Activated CD4-positive, alpha-beta T cell treated with anti-CD3 and anti-CD28 coated beads for 36 hours (primary cell): ENCODE measurements at regions of chr6 and their contacts with region 1.

Region 1: GRCh38 chr6:6515691-6516607 is 72.6 kb upstream of the LY86 start:
- DNase-seq: peak; percentile 84
- ATAC-seq: peak; percentile 90
- H3K4me3 Mint-ChIP-seq: no peak overlapping the region
- H3K27ac Mint-ChIP-seq: no peak overlapping the region
- H3K4me1 Mint-ChIP-seq: peaks cover 18% of the 10 kb centered on the region
- H3K27me3 Mint-ChIP-seq: peaks cover 78% of the 10 kb centered on the region

Region 2: DNA sequence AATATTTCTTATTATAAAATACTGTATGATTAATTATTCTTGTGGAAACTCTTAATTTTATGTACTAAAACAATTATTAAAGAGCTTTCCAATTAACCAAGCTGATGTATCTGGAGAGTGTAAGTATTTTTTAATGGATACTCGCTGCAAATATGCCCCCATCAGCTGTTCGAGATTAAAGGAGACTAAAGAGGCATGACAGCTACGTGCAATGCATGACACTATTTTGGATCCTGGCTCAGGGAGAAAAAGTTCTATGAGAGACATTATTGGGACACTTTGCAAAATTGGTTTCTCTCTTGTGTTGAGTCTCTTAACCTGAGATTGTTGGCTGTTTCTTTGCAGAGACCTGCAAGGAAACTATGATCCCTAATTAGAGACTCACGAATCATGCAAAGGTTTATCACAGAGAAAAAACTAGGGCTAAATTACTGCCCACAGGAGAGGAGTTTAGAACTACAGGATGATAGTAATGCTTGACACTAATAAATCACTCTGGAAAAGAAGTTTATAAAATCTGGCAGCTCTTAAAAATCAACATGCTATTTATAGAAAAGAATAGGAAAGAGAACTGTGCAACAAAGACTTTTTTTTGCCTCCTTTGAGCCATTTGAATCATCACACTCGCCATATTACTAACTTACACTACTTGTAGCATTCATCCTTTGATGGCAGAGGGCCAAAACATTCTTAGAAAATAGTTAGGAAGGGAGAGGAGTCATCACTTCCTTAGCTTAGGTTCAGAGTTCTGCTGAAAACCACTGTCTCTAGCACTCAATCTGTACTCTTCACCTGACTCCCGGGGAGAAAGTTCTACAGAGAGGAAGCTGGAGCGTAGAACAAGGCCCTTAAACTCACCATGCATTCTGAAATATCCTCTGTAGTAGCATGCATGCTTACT is 534.6 kb before region 1 on chr6:
- CTCF ChIA-PET with region 1: no interaction called
- POLR2A ChIA-PET with region 1: no interaction called
- intact Hi-C with region 1: loop called (anchors 5 kb)
- DNase-seq: no peak
- ATAC-seq: peak; percentile 69
- H3K4me3 Mint-ChIP-seq: no peak overlapping the region
- H3K27ac Mint-ChIP-seq: no peak overlapping the region
- H3K4me1 Mint-ChIP-seq: peaks cover 44% of the 10 kb centered on the region
- H3K27me3 Mint-ChIP-seq: no peaks in the 10 kb centered on the region

Region 3: DNA sequence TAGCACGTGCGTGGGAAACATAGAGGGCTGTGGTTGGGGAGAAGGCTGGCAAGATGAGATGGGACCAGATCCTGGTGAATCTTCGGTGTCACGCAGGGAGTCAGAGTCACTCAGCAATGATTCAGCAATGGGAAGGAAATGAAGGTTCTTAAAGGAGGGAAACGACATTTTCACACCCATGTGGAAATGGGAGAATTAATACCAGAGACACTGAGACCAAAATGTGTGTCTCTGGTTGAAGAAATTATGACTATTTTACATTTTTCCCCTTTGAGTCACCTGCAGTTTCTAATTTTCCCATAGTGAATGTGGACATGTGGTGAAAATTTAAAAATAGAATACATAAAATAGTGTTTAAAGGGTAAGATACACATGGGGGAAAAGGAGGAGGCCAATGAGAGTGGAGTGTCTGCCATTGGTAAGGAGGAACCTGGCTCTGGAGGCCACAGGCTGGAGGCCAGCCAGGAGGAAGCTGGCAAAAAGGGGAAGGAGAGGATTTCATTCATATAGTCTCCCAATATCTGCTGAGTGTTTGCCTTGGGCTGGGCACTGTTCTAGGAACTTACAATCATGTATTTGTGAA is 526.7 kb before region 1 on chr6:
- CTCF ChIA-PET with region 1: no interaction called
- POLR2A ChIA-PET with region 1: no interaction called
- intact Hi-C with region 1: loop called (anchors 5 kb)
- DNase-seq: no peak
- ATAC-seq: no peak
- H3K4me3 Mint-ChIP-seq: no peak overlapping the region
- H3K27ac Mint-ChIP-seq: no peak overlapping the region
- H3K4me1 Mint-ChIP-seq: peaks cover 21% of the 10 kb centered on the region
- H3K27me3 Mint-ChIP-seq: peaks cover 29% of the 10 kb centered on the region

Region 4: DNA sequence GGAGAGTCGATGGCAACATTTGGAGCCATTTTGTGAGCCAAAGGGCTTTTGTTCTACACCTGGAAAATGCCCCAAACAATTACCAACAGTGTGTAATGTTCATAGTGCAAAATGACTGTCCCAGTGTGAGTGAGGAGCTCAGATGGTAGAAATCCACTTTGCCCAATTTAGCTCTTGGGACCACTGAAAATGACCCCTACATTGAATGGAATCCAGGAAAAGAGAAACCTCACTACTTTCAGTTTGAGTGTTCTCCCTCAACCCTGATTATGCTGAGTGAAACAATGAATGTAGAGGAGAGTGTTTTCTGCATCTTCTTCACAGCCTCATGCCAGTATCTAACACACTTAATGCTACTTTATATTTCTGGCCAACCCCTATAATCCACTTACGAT is 424.3 kb before region 1 on chr6:
- CTCF ChIA-PET with region 1: no interaction called
- POLR2A ChIA-PET with region 1: no interaction called
- intact Hi-C with region 1: loop called in 1 of 2 experiments (anchors 1 kb)
- DNase-seq: no peak
- ATAC-seq: no peak
- H3K4me3 Mint-ChIP-seq: no peak overlapping the region
- H3K27ac Mint-ChIP-seq: no peak overlapping the region
- H3K4me1 Mint-ChIP-seq: peaks cover 7% of the 10 kb centered on the region
- H3K27me3 Mint-ChIP-seq: peaks cover 17% of the 10 kb centered on the region

Region 5: DNA sequence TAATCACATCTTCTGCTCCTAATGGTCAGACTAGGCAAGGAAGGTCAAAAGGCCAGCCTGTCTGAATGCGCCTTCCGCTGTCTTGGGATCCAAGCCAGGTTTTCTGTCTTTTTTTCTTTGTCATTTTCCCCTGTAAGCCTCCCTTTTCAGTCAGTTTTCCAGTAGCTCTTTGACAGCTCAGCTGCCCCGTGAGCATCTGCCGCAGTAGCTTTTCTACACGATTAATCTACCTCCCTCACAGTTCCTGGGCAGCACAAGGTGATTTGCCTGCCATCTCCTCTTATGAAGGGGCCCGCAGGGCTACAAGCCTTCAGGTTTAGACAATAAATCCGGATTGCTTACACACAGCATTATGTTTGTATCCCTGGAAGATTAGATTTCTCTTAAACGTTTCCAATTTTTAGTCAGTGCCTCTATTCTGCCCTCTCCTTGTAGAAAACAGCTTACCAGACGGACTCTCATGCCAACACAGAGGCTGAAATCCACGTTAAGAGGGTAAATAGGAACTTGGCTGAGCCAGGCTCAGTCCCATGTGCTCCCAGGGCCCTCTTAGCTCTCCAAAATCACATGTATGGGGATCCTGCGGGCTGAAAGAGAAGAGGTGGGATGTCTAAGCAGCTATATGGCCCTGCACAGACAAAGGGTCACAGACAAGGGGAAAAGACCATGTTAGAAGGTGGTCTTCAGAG is 149.8 kb after region 1 on chr6:
- CTCF ChIA-PET with region 1: no interaction called
- POLR2A ChIA-PET with region 1: no interaction called
- intact Hi-C with region 1: no loop called
- DNase-seq: no peak
- ATAC-seq: no peak
- H3K4me3 Mint-ChIP-seq: no peak overlapping the region
- H3K27ac Mint-ChIP-seq: no peak overlapping the region
- H3K4me1 Mint-ChIP-seq: peaks cover 26% of the 10 kb centered on the region
- H3K27me3 Mint-ChIP-seq: peaks cover 2% of the 10 kb centered on the region